Psoas muscle (tissue), 8 donors: ENCODE measurements at regions of chr2 and their contacts with region 1.

Region 1: GRCh38 chr2:241821460-241822263 is 12.7 kb downstream of the NEU4 start:
- DNase-seq: no peak
- ATAC-seq: no peak
- H3K4me3 ChIP-seq: peak overlapping the region; percentile 15
- H3K27ac ChIP-seq: no peak overlapping the region
- H3K4me1 ChIP-seq: no peaks in the 10 kb centered on the region
- H3K27me3 ChIP-seq: peaks cover 0 to 5% (median 2%) of the 10 kb centered on the region in 3 donors
- CTCF ChIP-seq: no peak

Region 2: GRCh38 chr2:241842620-241843211 is 21.1 kb after region 1 on chr2:
- intact Hi-C with region 1: loop called in 1 of 2 experiments (anchors 2 kb)
- DNase-seq: peak; percentile 49 to 65
- ATAC-seq: peak in 2 of 4 donors; percentile 20 to 32
- H3K4me3 ChIP-seq: peak overlapping the region; percentile 5
- H3K27ac ChIP-seq: peak overlapping the region; percentile 9
- H3K4me1 ChIP-seq: no peaks in the 10 kb centered on the region
- H3K27me3 ChIP-seq: peaks cover 0 to 3% (median 0%) of the 10 kb centered on the region in 3 donors
- CTCF ChIP-seq: no peak